Activated CD4-positive, alpha-beta memory T cell treated with anti-CD3 and anti-CD28 coated beads, Interleukin-2, amount 10 ng/mL, durations not matched to agents 7 days and 5 days (primary cell): ENCODE measurements at regions of chr18 and their contacts with region 1.

Region 1: DNA sequence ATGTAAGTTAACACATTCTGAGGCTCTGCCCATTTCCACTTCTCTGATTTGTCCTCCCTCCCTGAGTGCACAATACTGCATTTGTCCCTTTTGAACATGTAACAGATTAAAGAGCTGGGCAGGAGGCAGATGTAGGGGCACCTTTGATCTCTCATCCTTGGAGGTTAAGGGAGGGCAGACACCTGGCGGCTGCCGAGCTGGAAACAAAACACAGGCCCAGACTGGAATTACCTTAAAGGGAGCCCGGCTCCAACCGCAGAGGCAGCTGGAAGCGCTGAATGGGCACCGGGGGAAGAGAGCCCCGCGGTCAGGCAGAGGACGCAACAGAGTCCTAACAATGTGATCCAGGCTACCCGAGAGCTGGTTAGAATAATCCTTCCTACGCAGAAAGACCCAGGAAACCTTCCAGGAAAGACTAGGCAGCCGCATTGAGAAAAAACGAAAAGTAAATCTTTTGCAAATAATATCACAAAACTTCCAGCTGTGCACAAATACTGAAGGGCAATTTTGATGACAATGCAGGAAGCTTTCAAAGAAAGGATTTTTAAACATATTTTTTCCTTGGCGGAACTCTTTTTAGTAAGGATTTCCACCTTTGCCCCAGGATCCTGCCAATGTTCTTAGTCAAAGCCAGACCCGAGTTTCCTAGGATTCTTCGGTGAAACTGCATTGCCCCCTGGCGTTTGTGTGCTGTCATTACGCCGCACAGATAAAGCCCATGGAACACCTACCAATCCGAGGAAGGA is 216.0 kb downstream of the TGIF1 start:
- DNase-seq: peak; percentile 76
- H3K4me3 Mint-ChIP-seq: no peak overlapping the region
- H3K27ac Mint-ChIP-seq: no peak overlapping the region
- H3K4me1 Mint-ChIP-seq: peaks cover 26% of the 10 kb centered on the region
- H3K27me3 Mint-ChIP-seq: no peaks in the 10 kb centered on the region

Region 2: DNA sequence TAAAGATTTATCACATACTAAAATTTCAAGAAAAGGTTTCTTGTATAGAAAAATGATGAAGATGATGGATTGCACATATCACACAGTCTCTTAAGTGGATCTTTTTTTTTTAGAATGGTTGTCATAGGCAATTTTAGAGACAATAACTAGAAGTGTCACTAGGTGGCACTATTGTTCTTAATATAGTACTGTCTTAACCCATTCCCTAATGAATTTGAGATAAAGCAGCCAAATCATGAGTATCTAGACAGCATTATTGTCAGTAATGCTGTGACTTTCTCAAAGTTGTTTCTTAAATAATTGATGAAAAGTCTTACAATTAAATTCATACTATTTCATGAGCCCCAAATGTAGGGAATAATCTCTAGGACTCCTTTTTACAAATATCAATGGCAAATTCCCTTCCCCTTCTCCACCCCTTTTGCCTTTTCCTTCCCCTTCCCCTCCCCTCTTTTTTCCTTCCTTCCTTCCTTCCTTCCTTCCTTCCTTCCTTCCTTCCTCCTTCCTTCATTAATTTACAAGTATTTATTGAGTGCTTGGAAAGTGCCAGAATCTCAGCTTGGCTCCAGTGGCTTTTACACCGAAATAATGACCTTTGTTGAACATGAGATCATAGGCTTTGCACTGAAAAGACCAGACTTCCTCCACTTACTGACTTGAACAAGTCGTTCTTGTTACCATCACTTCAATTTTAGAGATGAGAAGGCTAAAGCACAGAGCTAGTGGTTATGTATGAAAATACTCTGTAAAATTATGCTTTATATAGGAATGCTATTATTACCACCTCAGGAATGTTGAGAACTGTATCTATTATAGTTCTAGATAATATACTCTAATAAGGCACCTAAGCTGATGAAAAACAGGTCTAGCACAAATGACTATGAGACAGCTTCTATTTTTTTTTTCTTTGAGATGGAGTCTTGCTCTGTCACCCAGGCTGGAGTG is 384.2 kb before region 1 on chr18:
- CTCF ChIA-PET with region 1: interaction called, 113 read pairs
- POLR2A ChIA-PET with region 1: interaction called, 3 read pairs
- DNase-seq: no peak
- H3K4me3 Mint-ChIP-seq: no peak overlapping the region
- H3K27ac Mint-ChIP-seq: no peak overlapping the region
- H3K4me1 Mint-ChIP-seq: no peaks in the 10 kb centered on the region
- H3K27me3 Mint-ChIP-seq: no peaks in the 10 kb centered on the region

Region 3: GRCh38 chr18:3447895-3448837 is 217.8 kb before region 1 on chr18:
- CTCF ChIA-PET with region 1: interaction called, 41 read pairs
- POLR2A ChIA-PET with region 1: interaction called, 5 read pairs
- DNase-seq: peak; percentile 88
- H3K4me3 Mint-ChIP-seq: peak overlapping the region; percentile 92
- H3K27ac Mint-ChIP-seq: peak overlapping the region; percentile 99
- H3K4me1 Mint-ChIP-seq: peaks cover 31% of the 10 kb centered on the region
- H3K27me3 Mint-ChIP-seq: no peaks in the 10 kb centered on the region

Region 4: GRCh38 chr18:3585656-3586509 is 80.1 kb before region 1 on chr18:
- CTCF ChIA-PET with region 1: interaction called, 31 read pairs
- POLR2A ChIA-PET with region 1: no interaction called
- DNase-seq: peak; percentile 79
- H3K4me3 Mint-ChIP-seq: no peak overlapping the region
- H3K27ac Mint-ChIP-seq: no peak overlapping the region
- H3K4me1 Mint-ChIP-seq: peaks cover 37% of the 10 kb centered on the region
- H3K27me3 Mint-ChIP-seq: no peaks in the 10 kb centered on the region

Region 5: DNA sequence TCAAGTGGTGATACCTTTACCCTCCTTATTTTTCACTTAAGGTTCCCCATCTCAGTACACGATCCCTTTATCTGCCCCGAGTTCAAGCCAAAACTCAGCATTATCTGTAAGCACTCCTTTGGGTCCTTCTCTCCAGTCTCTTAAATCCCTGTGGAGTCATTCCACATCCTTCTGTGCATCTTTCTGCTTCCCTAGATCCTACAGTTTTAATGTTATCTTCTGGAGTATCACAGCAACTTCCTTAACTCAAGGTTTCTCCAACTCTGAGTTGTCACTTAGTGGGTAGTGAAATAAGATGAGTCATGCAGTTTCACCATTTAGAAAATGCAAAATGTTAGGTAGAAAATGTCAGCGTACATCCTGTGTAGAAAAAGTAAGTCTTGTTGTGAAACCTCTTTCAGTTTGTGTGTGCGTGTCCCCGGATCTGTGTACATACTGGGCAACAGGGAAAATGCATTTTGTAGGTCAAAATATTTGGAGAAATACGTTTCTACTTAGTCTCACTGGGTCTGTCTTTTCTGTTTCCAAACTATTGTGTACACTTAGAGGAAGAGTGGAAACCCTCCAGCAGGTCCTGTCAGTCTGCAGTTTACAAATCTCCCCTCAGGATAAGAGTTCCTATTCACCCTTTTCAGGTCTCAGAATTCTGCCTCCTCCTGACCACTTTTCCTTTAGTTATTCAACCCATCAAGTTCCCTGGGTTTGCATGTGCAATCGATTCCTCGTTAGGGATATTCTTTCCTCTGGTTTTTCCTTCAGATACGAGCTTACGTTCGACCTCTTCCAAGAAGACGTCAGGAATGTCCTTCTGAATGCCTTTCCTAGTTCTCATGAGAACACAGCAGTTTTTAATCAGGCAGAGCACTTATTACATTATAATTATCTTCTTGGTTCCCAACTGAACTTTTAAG is 61.2 kb before region 1 on chr18:
- CTCF ChIA-PET with region 1: interaction called, 23 read pairs
- POLR2A ChIA-PET with region 1: interaction called, 9 read pairs
- DNase-seq: peak; percentile 50
- H3K4me3 Mint-ChIP-seq: no peak overlapping the region
- H3K27ac Mint-ChIP-seq: no peak overlapping the region
- H3K4me1 Mint-ChIP-seq: peaks cover 18% of the 10 kb centered on the region
- H3K27me3 Mint-ChIP-seq: no peaks in the 10 kb centered on the region

Region 6: DNA sequence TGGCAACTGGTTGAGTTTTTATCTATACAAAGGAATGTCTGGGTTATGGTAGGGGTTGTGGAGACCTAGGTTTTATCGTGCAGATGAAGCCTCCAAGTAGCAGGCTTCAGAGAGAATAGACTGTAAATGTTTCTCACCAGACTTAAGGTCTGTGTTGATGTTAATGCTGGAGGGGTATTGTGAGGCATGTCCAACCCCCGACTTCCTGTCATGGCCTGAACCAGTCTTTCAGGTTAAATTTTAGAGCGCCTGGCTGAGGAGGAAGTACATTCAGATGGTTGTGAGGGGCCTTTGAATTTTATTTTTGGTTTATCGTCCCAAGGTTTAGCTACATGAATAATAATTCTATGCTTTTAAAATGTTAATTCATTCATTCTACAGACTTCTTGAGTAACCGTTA is 354.1 kb after region 1 on chr18:
- CTCF ChIA-PET with region 1: no interaction called
- POLR2A ChIA-PET with region 1: no interaction called
- DNase-seq: no peak
- H3K4me3 Mint-ChIP-seq: no peak overlapping the region
- H3K27ac Mint-ChIP-seq: no peak overlapping the region
- H3K4me1 Mint-ChIP-seq: peaks cover 5% of the 10 kb centered on the region
- H3K27me3 Mint-ChIP-seq: no peaks in the 10 kb centered on the region